Endothelial cell of umbilical vein (primary cell): ENCODE measurements at regions of chr11 and their contacts with region 1.

Region 1: GRCh38 chr11:66001942-66002647 is at the starts of genes BANF1 and EIF1AD:
- DNase-seq: peak; percentile 98
- H3K4me3 ChIP-seq: peak within 1 kb of the TSS; percentile 68 to 88 (median 82)
- H3K27ac ChIP-seq: peak within 1 kb of the TSS; percentile 66
- H3K4me1 ChIP-seq: peaks cover 9% of the 10 kb centered on the region
- H3K27me3 ChIP-seq: no peaks in the 10 kb centered on the region
- CTCF ChIP-seq: no peak
- POLR2A ChIP-seq: peak; percentile 93
- total RNA-seq, gene BANF1: 246 and 269 TPM in 2 replicates
- total RNA-seq, gene EIF1AD: 39.7 and 42.4 TPM in 2 replicates

Region 2: DNA sequence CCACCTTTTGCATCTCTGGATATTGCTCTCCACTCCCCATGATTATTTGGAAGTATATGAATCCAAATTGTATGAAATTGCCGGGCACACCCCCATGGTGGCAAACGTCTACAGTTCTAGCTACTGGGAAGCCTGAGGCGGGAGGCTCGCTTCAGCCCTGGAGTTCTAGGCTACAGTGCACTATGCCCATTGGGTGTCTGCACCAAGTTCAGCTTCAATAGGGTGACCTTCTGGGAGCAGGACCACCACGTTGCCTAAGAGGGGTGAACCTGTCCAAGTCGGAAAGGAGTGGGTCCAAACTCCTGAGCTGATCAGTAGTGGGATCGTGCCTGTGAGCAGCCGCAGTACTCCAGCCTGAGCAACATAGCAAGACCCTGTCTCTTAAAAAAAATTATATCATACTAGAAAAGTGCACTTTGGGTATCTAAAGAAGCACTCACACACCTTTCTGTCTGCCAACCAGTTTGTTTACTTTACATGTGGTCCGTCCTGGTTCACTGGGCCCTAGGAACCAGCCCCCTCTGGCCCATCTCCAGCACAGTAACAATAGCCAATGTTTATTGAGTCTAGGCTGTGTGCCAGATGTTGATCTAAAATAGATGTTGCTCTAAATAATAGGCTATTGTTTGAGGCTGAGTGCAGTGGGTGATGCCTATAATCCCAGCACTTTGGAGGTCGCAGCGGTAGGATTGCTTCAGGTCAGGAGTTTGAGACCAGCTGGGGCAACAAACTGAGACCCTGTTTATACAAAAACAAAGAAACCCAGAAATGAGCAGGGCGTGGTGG is 306.4 kb before region 1 on chr11:
- CTCF ChIA-PET with region 1: no interaction called
- POLR2A ChIA-PET with region 1: no interaction called
- dilution Hi-C with region 1: no loop called
- intact Hi-C with region 1: no loop called
- DNase-seq: peak; percentile 95
- H3K4me3 ChIP-seq: no peak overlapping the region
- H3K27ac ChIP-seq: no peak overlapping the region
- H3K4me1 ChIP-seq: peaks cover 9% of the 10 kb centered on the region
- H3K27me3 ChIP-seq: peaks cover 3 to 7% of the 10 kb centered on the region in 2 experiments
- CTCF ChIP-seq: no peak
- POLR2A ChIP-seq: no peak

Region 3: DNA sequence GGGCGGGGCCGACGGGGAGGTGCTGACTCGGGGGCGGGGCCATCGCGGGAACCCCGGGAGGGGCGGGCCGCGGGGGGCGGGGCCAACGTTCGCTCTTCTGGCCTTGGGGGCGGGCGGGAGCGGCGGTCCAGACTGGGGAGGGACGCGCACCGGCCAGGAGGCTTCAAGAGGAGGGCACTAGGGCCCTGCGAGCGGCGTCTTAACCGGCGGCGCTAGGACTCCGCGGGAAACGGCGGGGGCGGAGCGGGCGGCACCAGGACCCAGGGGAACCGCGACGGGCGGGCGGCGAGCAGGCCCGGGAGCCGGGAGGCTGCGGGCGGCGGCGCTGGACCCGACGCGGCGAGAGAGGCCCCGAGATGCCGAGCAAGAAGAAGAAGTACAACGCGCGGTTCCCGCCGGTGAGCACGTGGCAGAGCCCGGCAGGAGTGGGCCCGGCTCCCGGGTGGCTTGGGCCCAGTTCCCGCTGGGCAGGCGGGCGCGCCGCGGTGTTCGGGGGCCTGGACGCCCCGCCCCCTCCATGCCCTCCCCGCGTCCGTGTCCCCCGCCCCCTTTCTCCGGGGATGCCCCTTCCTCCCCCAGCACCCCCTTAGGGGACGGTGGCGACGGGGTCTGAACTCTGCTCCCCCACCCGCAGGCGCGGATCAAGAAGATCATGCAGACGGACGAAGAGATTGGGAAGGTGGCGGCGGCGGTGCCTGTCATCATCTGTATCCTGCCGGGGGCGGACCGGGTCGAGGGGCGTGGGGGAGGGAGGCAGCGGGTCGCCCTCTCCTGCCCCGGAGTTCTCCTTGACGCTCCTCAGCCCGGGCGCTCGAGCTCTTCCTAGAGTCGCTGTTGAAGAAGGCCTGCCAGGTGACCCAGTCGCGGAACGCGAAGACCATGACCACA is 82.7 kb before region 1 on chr11 and contains the start of gene DRAP1:
- CTCF ChIA-PET with region 1: no interaction called
- POLR2A ChIA-PET with region 1: no interaction called
- dilution Hi-C with region 1: no loop called
- intact Hi-C with region 1: loop called (anchors 1 kb)
- DNase-seq: peak; percentile 97
- H3K4me3 ChIP-seq: peak within 1 kb of the TSS; percentile 70 to 90 (median 71)
- H3K27ac ChIP-seq: peak within 1 kb of the TSS; percentile 92
- H3K4me1 ChIP-seq: peaks cover 49% of the 10 kb centered on the region
- H3K27me3 ChIP-seq: no peaks in the 10 kb centered on the region
- CTCF ChIP-seq: no peak
- POLR2A ChIP-seq: peak; percentile 23
- total RNA-seq, gene DRAP1: 114 and 118 TPM in 2 replicates

Region 4: DNA sequence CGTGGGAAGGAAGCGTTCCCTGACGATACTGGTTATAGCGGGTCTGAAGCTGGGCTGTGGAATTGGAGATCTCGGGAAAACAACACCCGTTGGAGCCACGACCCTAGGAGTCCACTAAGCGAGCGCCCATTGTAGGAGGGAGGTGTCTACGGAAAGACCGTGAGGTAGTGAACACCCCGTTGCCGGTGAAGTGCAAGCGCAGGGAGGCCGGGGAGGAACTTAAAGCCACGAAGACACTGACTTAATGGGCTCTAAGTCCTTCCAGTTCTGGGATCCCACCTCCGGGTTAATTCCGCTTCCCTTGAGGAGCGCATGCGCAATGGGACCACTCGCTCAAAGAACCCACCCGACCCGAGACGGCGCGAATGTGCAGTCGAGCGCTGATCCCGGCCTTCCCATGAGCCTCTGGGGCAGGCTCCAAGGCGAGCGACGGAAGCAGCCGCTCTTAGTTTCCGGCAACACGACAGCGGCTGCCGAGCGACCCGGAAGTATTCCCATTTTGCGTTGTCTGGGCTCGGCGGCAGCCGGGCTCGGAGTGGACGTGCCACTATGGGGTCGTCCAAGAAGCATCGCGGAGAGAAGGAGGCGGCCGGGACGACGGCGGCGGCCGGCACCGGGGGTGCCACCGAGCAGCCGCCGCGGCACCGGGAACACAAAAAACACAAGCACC is 40.7 kb before region 1 on chr11 and contains the start of gene SART1:
- CTCF ChIA-PET with region 1: no interaction called
- POLR2A ChIA-PET with region 1: no interaction called
- dilution Hi-C with region 1: no loop called
- intact Hi-C with region 1: loop called (anchors 1 kb)
- DNase-seq: peak; percentile 99
- H3K4me3 ChIP-seq: peak within 1 kb of the TSS; percentile 79 to 98 (median 90)
- H3K27ac ChIP-seq: peak within 1 kb of the TSS; percentile 78
- H3K4me1 ChIP-seq: peaks cover 11% of the 10 kb centered on the region
- H3K27me3 ChIP-seq: no peaks in the 10 kb centered on the region
- CTCF ChIP-seq: no peak
- POLR2A ChIP-seq: peak; percentile 98
- total RNA-seq, gene SART1: 58.9 and 62.7 TPM in 2 replicates

Region 5: DNA sequence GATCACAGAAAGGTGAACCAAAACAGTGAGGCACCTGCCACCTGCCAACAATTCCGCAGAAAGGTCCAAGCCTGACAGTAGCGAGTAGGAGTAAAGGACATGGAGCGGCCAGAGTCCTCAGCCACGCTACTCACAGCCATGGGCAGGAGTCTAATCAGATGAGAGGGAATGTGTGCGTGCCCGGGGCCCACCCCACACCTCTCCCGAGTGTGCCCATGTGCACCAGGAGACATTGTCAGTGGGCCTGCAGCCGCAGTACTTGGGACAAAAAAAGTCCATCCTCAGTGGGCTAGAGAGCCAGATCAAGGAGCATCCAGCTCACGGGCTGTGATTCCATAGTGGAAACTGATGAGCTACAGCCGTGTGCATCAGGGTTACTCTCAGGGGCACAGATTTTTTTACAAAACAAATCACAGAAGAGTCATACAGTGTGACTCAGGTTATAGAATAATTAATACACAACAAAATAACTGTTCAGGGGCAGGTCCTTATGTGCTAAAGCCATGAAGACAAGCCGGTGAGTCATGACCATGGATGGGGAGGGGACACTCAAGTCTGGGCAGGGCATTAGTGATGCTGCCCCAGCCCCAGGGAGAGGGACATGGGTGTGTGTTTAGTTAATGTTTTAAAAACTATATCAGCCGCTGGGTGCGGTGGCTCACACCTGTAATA is 28.5 kb before region 1 on chr11:
- CTCF ChIA-PET with region 1: no interaction called
- POLR2A ChIA-PET with region 1: no interaction called
- dilution Hi-C with region 1: no loop called
- intact Hi-C with region 1: no loop called
- DNase-seq: no peak
- H3K4me3 ChIP-seq: no peak overlapping the region
- H3K27ac ChIP-seq: no peak overlapping the region
- H3K4me1 ChIP-seq: no peaks in the 10 kb centered on the region
- H3K27me3 ChIP-seq: no peaks in the 10 kb centered on the region
- CTCF ChIP-seq: no peak
- POLR2A ChIP-seq: no peak

Region 6: GRCh38 chr11:66022401-66023185 is 20.5 kb after region 1 on chr11:
- CTCF ChIA-PET with region 1: interaction called, 37 read pairs
- POLR2A ChIA-PET with region 1: interaction called, 5 read pairs
- dilution Hi-C with region 1: no loop called
- intact Hi-C with region 1: loop called (anchors 1 kb)
- DNase-seq: peak; percentile 67
- H3K4me3 ChIP-seq: no peak overlapping the region
- H3K27ac ChIP-seq: no peak overlapping the region
- H3K4me1 ChIP-seq: peaks cover 17% of the 10 kb centered on the region
- H3K27me3 ChIP-seq: no peaks in the 10 kb centered on the region
- CTCF ChIP-seq: peak; percentile 97 to 98
- POLR2A ChIP-seq: no peak

Region 7: GRCh38 chr11:66045177-66045639 is 43.1 kb after region 1 on chr11:
- CTCF ChIA-PET with region 1: interaction called, 9 read pairs
- POLR2A ChIA-PET with region 1: no interaction called
- dilution Hi-C with region 1: no loop called
- intact Hi-C with region 1: loop called (anchors 2 kb)
- DNase-seq: peak; percentile 69
- H3K4me3 ChIP-seq: no peak overlapping the region
- H3K27ac ChIP-seq: no peak overlapping the region
- H3K4me1 ChIP-seq: no peaks in the 10 kb centered on the region
- H3K27me3 ChIP-seq: peaks cover 2 to 3% of the 10 kb centered on the region in 2 experiments
- CTCF ChIP-seq: peak; percentile 91 to 98
- POLR2A ChIP-seq: no peak

Region 8: DNA sequence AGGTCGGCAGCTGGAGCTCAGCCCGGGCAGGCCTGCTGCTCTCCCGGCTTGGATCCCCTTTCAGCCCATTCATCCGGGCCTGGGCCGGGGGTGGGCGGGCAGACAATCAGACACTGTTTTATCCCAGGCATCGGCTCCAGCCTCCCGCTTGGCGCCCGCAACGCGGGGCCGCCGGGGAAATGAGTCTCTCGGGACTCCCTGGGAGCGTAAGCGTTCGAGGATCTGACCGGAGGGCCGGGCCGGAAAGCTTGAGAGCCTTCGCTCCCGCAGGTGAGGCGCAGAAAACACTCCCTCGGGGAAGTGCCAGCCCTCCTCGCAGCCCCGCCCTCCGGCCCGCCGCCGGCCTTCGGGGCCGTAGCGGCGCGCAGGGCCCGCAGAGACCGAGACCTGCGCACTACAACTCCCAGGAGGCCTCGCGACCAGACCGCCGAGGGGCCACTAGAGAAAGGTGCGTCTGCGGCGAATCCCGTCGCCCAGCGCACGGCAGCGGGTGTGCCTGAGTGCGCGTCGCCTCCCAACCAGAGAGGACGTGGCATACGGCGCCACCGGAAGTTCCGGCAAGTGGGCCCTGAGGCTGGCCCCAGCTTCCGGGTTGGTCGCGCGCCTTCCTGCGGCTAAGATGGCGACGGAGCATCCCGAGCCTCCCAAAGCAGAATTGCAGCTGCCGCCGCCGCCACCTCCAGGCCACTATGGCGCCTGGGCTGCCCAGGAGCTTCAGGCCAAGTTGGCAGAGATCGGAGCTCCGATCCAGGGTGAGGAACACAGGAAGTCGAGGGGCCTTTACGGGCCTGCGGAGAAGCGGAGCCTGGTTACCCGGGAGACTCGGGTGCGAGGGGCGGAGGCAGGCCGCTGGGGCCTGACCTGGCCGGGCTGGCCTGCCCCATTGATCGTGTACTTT is 49.9 kb after region 1 on chr11 and contains the start of gene SF3B2:
- CTCF ChIA-PET with region 1: no interaction called
- POLR2A ChIA-PET with region 1: interaction called, 3 read pairs
- dilution Hi-C with region 1: no loop called
- intact Hi-C with region 1: loop called (anchors 1 kb)
- DNase-seq: peak; percentile 99
- H3K4me3 ChIP-seq: peak within 1 kb of the TSS; percentile 67 to 93 (median 80)
- H3K27ac ChIP-seq: peak within 1 kb of the TSS; percentile 63
- H3K4me1 ChIP-seq: peaks cover 14% of the 10 kb centered on the region
- H3K27me3 ChIP-seq: peaks cover 0 to 1% of the 10 kb centered on the region in 2 experiments
- CTCF ChIP-seq: no peak
- POLR2A ChIP-seq: peak; percentile 88
- total RNA-seq, gene SF3B2: 179 and 196 TPM in 2 replicates